Dendritic cell treated with granulocyte-macrophage colony-stimulating factor and Interleukin-4, amounts not matched to agents 40 ng/mL and 50 ng/mL, for 4 days (primary cell): ENCODE measurements at regions of chr5 and their contacts with region 1.

Region 1: DNA sequence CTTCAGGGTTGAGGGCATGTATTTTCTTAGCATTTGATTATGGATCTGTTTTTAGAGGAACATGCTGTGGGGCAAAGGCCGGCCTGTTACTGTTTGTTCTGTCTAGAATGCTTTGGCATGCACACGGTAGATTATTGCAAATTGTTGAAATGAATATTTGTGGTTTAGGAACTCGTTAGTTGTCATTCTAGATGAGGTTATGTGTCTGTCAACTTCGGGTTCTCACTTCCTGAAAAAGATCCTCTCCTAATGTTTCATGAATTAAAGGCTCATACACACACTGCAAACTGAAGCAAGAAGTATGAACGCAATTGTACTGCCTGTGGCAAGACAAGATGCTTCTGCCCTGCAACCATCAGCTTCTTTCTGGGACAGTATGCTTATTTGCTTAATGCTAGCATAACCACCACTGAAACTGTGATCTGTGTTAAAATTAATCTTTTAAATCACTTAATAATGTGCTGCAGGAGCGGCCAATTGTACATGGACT is 99.6 kb downstream of the BASP1 start:
- H3K4me3 Mint-ChIP-seq: no peak overlapping the region
- H3K27ac Mint-ChIP-seq: no peak overlapping the region
- H3K4me1 Mint-ChIP-seq: peaks cover 48% of the 10 kb centered on the region
- H3K27me3 Mint-ChIP-seq: peaks cover 59% of the 10 kb centered on the region

Region 2: DNA sequence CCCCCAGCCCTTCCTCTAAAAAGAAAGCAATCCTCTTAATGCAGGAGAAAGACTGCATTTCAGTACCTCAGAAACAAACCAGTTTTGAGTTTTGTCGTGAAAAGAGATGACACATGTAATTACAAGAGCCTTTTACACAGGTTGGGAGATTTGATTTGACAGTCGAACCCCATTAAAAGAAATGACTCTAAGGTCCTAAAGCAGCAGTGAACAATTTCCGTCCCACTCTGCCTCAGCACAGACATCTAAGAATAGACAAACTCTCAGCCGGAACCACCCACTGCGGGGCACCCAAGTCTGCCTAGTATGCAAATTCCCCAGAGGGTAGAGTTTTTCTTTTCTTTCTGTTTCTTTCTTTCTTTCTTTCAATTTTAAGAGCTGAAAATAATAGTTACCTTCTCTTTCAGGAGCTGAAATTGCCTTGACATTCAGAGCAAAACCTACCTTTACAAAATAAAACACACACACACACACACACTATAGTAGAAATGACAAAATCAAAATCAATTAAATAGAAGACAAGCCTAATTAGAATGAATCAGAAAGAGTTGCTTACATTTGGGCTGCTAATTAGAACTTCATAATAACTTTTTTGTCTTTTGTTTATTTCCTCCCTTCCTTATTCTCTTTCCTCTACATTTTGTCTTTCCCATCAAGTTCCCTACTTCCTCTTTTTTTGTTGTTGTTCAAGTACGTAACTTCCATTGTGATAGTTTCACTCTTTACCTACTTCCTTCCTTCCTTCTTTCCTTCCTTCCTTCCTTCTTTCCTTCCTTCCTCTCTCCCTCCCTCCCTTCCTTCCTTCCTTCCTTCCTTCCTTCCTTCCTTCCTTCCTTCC is 34.5 kb before region 1 on chr5:
- intact Hi-C with region 1: loop called (anchors 5 kb)
- H3K4me3 Mint-ChIP-seq: no peak overlapping the region
- H3K27ac Mint-ChIP-seq: peak overlapping the region; percentile 19
- H3K4me1 Mint-ChIP-seq: peaks cover 10% of the 10 kb centered on the region
- H3K27me3 Mint-ChIP-seq: no peaks in the 10 kb centered on the region

Region 3: GRCh38 chr5:17327048-17327625 is 10.1 kb after region 1 on chr5:
- intact Hi-C with region 1: no loop called
- H3K4me3 Mint-ChIP-seq: no peak overlapping the region
- H3K27ac Mint-ChIP-seq: no peak overlapping the region
- H3K4me1 Mint-ChIP-seq: no peaks in the 10 kb centered on the region
- H3K27me3 Mint-ChIP-seq: peaks cover 14% of the 10 kb centered on the region